Adrenal gland (tissue), 19 donors: ENCODE measurements at regions of chr12 and their contacts with region 1.

Region 1: DNA sequence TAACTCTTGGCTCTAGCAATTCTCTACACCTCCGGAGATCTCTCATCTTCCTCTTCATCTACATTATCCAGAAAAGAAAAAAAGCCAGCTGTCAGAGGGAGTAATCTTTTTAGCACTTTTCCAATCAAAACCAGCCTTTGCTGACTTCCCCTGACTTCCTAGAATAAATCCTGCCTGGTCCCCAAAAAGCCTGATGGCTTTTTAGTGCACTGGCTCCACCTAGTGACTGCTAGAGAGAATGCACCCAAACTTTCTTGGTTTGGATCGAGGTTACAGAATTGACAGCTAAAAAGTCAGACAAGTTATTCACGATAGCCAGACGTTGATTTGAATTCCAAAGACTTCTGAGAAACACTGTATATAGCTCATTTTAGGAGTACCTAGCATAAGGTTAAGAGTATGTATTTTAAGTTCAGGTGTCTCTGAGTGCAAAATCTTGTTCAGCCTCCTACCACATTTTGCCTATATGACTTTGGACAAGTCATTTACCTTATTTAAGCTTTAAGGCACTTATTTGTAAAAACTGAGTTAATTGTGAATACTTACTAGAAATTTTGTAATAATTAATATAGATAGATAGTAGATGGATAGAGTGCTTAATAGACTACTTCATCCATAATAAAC is 185.7 kb upstream of the GRIN2B start:
- DNase-seq: peak; percentile 16 to 68 (median 44)
- H3K4me3 ChIP-seq: no peak overlapping the region
- H3K27ac ChIP-seq: no peak overlapping the region
- H3K4me1 ChIP-seq: no peaks in the 10 kb centered on the region
- H3K27me3 ChIP-seq: no peaks in the 10 kb centered on the region
- CTCF ChIP-seq: peak; percentile 79 to 96 (median 86)
- POLR2A ChIP-seq: no peak

Region 2: GRCh38 chr12:13864081-13864673 is 302.9 kb before region 1 on chr12:
- intact Hi-C with region 1: loop called in 1 of 2 experiments (anchors 5 kb)
- DNase-seq: peak; percentile 70 to 87 (median 83)
- H3K4me3 ChIP-seq: no peak overlapping the region
- H3K27ac ChIP-seq: no peak overlapping the region
- H3K4me1 ChIP-seq: no peaks in the 10 kb centered on the region
- H3K27me3 ChIP-seq: peaks cover 7% of the 10 kb centered on the region
- CTCF ChIP-seq: peak; percentile 75 to 92 (median 82)
- POLR2A ChIP-seq: no peak